Breast epithelium (tissue), 4 donors: ENCODE measurements at regions of chr2 and their contacts with region 1.

Region 1: GRCh38 chr2:15400240-15400826 is 160.8 kb downstream of the NBAS start:
- DNase-seq: no peak
- H3K4me3 ChIP-seq: no peak overlapping the region
- H3K27ac ChIP-seq: no peak overlapping the region
- H3K4me1 ChIP-seq: no peaks in the 10 kb centered on the region
- H3K27me3 ChIP-seq: no peaks in the 10 kb centered on the region
- CTCF ChIP-seq: no peak
- POLR2A ChIP-seq: no peak

Region 2: DNA sequence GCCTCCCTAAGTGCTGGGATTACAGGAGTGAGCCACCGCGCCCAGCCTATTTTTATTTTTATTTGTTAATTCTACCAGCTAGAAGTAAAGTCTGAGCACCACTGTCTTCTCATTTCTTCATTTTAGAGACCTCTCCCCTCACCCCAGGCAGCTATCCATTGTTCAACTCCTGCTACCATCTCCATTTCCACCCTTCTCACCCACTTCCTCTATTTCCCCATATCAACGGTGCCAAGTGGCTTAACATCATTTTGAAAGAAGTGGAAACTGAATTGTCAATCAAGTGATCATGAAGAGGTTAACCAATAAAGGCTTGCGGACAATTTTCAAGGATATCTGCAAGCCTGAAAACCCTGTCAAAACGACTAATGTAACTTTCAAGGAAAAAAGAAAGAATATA is 162.3 kb before region 1 on chr2:
- intact Hi-C with region 1: loop called (anchors 10 kb)
- DNase-seq: no peak
- H3K4me3 ChIP-seq: no peak overlapping the region
- H3K27ac ChIP-seq: no peak overlapping the region
- H3K4me1 ChIP-seq: no peaks in the 10 kb centered on the region
- H3K27me3 ChIP-seq: no peaks in the 10 kb centered on the region
- CTCF ChIP-seq: no peak
- POLR2A ChIP-seq: no peak